ENCODE measurements at regions of chr1 and their contacts with region 1.

Region 1: GRCh38 chr1:119608816-119609454 is 39.1 kb downstream of the ZNF697 start:
- H3K4me3 ChIP-seq: no peak overlapping the region
- H3K27ac ChIP-seq: no peak overlapping the region
- H3K4me1 ChIP-seq: no peaks in the 10 kb centered on the region
- CTCF ChIP-seq: no peak

Region 2: DNA sequence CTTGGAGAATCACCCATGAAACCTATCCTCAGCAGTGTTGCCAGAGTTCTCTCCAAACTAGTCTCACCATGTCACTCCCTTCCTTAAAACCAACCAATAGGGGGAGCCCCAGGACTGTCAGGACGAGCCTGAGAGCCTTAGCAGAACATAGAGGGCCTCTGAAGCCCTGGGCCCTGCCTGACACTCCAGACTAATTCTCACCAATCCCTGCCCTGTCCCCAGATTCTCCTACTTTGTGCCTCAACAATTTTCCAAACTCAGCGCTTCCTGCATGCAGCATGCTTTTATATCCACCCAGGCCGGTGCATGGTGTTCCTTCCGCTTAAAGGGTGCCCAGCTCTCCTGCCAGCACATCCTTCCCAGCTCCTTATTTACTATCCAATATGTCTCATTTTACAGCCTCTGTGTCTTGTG is 59.2 kb before region 1 on chr1:
- CTCF ChIA-PET with region 1: interaction called, 14 read pairs
- POLR2A ChIA-PET with region 1: no interaction called
- H3K4me3 ChIP-seq: no peak overlapping the region
- H3K27ac ChIP-seq: no peak overlapping the region
- H3K4me1 ChIP-seq: peaks cover 9% of the 10 kb centered on the region
- CTCF ChIP-seq: peak; percentile 66

Region 3: DNA sequence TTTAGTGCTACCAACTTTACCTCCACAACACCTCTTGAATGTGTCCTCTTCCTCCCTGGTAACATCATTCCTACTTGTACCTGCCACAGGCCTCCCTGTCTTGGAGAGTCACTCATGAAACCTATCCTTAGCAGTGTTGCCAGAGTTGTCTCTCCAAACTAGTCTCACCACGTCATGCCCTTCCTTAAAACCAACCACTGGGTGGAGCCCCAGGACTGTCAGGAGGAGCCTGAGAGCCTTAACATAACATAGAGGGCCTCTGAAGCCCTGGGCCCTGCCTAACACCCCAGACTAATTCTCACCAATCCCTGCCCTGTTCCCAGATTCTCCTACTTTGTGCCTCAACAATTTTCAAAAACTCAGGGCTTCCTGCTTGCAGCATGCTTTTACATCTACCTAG is 26.1 kb before region 1 on chr1:
- CTCF ChIA-PET with region 1: interaction called, 23 read pairs
- POLR2A ChIA-PET with region 1: no interaction called
- H3K4me3 ChIP-seq: no peak overlapping the region
- H3K27ac ChIP-seq: no peak overlapping the region
- H3K4me1 ChIP-seq: no peaks in the 10 kb centered on the region; the same call in 1 of the 2 replicates
- CTCF ChIP-seq: peak; percentile 86

Measured in HEK293 (cell line).